ENCODE measurements at regions of chr6 and their contacts with region 1.

Region 1: DNA sequence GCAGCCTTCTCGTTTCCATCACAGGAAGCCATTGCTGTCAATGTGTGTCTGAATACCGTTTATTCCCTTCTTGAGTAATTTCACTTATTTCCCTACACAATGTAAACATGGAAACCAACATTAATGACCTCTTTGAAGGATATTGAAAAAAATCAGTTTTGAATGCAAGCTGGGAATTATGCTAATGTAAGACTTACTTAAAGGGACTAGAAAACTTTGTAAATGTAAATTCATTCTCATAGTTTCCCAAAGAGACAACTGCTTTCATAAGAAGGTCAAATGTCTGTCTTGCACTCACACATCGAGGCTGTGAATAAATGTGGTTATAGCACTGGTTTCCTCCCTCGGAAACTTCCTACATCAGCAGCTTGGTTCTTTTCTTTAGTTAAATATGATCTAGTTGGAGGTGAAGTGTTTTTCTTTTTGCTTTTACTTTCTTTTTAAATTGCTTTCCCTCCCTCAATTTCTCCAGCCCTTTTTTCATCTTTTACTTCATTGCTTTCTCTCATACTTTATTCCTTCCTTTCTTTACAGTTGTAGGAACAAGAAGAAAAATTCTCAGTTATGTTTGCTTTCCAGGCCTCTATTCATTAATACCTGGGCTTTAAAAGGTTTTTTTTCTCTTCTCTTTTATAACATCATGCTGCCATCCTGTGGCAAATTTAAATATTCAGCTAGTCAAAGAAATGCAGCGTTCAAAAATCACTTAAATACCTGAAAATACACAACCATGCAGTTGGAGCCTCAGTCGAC is 108.3 kb downstream of the TNFAIP3 start:
- DNase-seq: peak in 5 of 9 experiments; percentile 19 to 89 (median 38)
- ATAC-seq: peak; percentile 80
- H3K4me3 ChIP-seq: peak overlapping the region; percentile 18 to 21
- H3K4me3 Mint-ChIP-seq: peak overlapping the region; percentile 74
- H3K27ac ChIP-seq: peak overlapping the region; percentile 39 to 85
- H3K27ac Mint-ChIP-seq: peak overlapping the region; percentile 92
- H3K4me1 ChIP-seq: peaks cover 24% of the 10 kb centered on the region
- H3K4me1 Mint-ChIP-seq: peaks cover 40% of the 10 kb centered on the region
- H3K27me3 ChIP-seq: no peaks in the 10 kb centered on the region
- H3K27me3 Mint-ChIP-seq: no peaks in the 10 kb centered on the region
- CTCF ChIP-seq: peak; percentile 75

Region 2: DNA sequence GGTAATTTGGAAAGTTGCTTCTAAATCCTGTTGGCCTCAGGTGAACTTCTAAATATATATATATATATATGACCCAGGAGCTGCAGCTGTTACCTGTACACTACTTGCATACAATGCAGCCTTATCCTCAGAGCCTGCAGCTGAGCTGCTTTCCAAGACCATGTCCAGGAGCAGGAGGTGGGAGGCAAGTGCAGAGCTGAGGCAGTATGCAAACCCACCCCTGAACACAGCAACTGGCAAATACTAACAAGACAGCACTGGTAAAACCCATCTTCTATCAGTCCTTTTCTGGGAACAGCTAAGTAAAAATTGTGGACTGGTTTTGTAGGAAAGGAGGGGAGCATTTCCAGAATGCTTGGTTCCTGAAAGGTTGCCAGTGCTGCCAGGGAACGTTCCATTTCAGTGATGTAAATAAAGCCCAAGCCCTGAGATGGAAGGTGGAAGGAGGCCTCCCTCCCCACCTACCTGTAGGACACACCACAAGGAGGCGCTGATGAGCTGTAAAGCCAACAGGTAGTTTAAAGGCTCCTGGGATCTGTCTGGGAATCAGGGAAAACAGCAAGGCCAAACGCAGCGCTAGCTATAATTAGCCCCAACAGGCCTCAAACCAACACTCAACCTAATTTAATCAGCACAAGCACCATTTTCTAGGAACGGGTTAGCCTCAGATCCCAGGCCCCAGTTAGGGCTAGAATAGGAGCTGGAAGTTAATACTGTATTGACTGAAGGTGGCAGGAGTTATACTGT is 1331.3 kb before region 1 on chr6:
- CTCF ChIA-PET with region 1: no interaction called
- POLR2A ChIA-PET with region 1: no interaction called
- intact Hi-C with region 1: no loop called
- DNase-seq: peak; percentile 52 to 86 (median 80)
- ATAC-seq: peak; percentile 54
- H3K4me3 ChIP-seq: no peak overlapping the region
- H3K4me3 Mint-ChIP-seq: no peak overlapping the region
- H3K27ac ChIP-seq: peak overlapping the region in 1 of 2 experiments; percentile 6
- H3K27ac Mint-ChIP-seq: peak overlapping the region; percentile 45
- H3K4me1 ChIP-seq: peaks cover 10% of the 10 kb centered on the region
- H3K4me1 Mint-ChIP-seq: peaks cover 3% of the 10 kb centered on the region
- H3K27me3 ChIP-seq: no peaks in the 10 kb centered on the region
- H3K27me3 Mint-ChIP-seq: no peaks in the 10 kb centered on the region
- CTCF ChIP-seq: peak; percentile 96

Region 3: DNA sequence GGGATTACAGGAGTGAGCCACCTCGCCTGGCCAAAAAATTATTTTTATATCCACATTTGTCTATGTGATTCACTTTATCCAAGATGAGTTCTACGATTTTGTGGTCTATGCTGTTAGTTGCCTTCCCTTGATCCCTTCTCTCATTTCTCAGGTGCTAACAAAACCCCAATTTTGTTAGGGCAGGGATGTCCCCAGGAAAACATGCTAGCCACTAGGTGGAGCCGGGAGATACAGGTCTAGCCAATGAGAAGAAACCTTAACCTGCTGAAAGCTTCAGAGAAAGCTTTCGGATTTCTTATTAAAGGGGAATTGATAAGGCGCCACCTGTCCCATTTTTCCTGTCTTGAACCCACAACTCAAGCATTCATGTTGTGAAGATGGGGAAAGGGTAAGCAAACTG is 313.8 kb before region 1 on chr6:
- CTCF ChIA-PET with region 1: interaction called, 9 read pairs
- POLR2A ChIA-PET with region 1: no interaction called
- intact Hi-C with region 1: loop called in 1 of 2 experiments (anchors 1 kb)
- DNase-seq: peak in 8 of 9 experiments; percentile 22 to 72 (median 48)
- ATAC-seq: no peak
- H3K4me3 ChIP-seq: no peak overlapping the region
- H3K4me3 Mint-ChIP-seq: no peak overlapping the region
- H3K27ac ChIP-seq: no peak overlapping the region
- H3K27ac Mint-ChIP-seq: no peak overlapping the region
- H3K4me1 ChIP-seq: no peaks in the 10 kb centered on the region
- H3K4me1 Mint-ChIP-seq: no peaks in the 10 kb centered on the region
- H3K27me3 ChIP-seq: no peaks in the 10 kb centered on the region
- H3K27me3 Mint-ChIP-seq: no peaks in the 10 kb centered on the region
- CTCF ChIP-seq: peak; percentile 26

Region 4: DNA sequence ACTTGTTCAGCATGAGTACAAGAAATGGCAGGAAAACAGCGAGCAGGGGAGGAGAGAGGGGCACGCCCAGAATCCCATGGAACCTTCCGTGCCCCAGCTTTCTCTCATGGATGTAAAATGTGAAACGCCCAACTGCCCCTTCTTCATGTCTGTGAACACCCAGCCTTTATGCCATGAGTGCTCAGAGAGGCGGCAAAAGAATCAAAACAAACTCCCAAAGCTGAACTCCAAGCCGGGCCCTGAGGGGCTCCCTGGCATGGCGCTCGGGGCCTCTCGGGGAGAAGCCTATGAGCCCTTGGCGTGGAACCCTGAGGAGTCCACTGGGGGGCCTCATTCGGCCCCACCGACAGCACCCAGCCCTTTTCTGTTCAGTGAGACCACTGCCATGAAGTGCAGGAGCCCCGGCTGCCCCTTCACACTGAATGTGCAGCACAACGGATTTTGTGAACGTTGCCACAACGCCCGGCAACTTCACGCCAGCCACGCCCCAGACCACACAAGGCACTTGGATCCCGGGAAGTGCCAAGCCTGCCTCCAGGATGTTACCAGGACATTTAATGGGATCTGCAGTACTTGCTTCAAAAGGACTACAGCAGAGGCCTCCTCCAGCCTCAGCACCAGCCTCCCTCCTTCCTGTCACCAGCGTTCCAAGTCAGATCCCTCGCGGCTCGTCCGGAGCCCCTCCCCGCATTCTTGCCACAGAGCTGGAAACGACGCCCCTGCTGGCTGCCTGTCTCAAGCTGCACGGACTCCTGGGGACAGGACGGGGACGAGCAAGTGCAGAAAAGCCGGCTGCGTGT is 96.7 kb before region 1 on chr6:
- CTCF ChIA-PET with region 1: interaction called, 4 read pairs
- POLR2A ChIA-PET with region 1: no interaction called
- intact Hi-C with region 1: loop called in 1 of 2 experiments (anchors 5 kb)
- DNase-seq: peak in 3 of 9 experiments; percentile 40 to 59 (median 45)
- ATAC-seq: no peak
- H3K4me3 ChIP-seq: no peak overlapping the region
- H3K4me3 Mint-ChIP-seq: peak overlapping the region; percentile 51
- H3K27ac ChIP-seq: no peak overlapping the region
- H3K27ac Mint-ChIP-seq: peak overlapping the region; percentile 45
- H3K4me1 ChIP-seq: peaks cover 40% of the 10 kb centered on the region
- H3K4me1 Mint-ChIP-seq: peaks cover 67% of the 10 kb centered on the region
- H3K27me3 ChIP-seq: no peaks in the 10 kb centered on the region
- H3K27me3 Mint-ChIP-seq: no peaks in the 10 kb centered on the region
- CTCF ChIP-seq: no peak

Measured in CD8-positive, alpha-beta T cell (primary cell).